ENCODE measurements at regions of chr2 and their contacts with region 1.

Region 1: GRCh38 chr2:174546581-174547506 is 50.8 kb downstream of the WIPF1 start:
- DNase-seq: peak; percentile 52
- CTCF ChIP-seq: peak; percentile 62

Region 2: DNA sequence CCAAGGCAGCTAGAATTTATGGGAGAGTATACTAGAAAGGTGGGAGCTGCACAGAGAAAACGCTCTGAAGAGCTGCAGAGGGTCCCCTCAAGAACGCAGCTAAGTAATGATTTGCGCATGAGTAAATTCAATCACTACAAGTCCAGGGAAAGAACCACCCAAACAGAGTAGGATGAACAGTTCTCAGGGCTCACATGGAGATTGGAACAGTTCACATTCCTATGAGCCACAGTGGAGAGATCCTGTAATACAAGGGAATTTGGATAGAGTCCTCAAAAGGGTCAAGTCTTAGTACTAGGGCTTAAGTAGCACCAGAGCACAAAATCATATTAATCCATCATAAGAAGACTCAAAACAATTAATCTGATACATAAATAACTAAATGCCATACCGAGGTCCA is 311.2 kb before region 1 on chr2:
- CTCF ChIA-PET with region 1: no interaction called
- POLR2A ChIA-PET with region 1: no interaction called
- DNase-seq: no peak
- CTCF ChIP-seq: no peak

Region 3: DNA sequence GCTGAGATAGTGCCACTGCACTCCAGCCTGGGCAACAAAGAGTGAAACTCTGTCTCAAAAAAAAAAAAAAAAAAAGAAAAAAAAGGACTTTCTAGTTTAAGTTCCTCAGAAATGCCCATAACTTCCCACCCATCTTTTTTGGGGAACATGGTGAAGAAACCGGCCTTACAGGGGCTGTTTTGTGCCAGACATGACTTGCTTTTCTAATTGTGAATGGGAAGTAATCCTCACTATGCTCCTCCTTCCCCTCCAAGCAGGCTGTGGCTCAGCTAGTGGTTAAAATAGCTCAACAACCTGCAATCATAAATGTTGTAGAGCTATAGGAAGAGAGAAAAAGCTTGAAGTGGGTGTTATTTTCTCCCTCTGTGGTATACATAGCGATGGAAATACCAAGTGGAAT is 264.4 kb before region 1 on chr2:
- CTCF ChIA-PET with region 1: no interaction called
- POLR2A ChIA-PET with region 1: no interaction called
- DNase-seq: no peak
- CTCF ChIP-seq: no peak

Region 4: DNA sequence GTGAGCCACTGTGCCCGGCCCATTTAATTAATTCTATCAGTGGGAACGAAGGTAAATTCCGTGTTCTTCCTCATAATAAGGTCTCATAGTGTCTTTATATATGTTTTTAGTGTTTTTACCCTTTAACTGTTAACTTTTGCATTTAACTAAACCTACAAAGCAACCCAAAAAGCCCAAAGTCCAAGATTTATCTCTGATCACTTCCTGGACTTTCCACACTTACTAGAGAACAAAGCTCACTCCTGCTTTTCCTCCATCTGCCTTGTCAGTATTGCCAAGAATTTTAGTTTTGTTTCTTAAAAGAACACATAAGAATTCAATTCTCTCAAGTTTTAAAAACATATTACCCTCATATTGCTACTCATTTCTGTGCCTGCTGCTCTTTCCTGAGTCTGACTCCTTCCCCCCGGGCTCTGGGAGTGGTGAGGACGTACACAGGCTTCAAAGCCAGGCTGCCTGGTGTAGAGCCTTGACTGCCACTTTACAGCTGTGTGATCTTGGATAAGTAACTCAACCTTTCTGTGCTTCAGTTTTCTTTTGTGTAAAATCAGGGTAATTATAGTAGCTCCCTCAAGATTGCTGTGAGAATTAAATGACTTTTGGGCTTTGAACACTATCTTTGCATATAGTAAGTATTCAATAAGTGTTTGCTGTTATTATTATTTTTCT is 35.1 kb before region 1 on chr2:
- CTCF ChIA-PET with region 1: interaction called, 11 read pairs
- POLR2A ChIA-PET with region 1: no interaction called
- DNase-seq: no peak
- CTCF ChIP-seq: no peak

Region 5: DNA sequence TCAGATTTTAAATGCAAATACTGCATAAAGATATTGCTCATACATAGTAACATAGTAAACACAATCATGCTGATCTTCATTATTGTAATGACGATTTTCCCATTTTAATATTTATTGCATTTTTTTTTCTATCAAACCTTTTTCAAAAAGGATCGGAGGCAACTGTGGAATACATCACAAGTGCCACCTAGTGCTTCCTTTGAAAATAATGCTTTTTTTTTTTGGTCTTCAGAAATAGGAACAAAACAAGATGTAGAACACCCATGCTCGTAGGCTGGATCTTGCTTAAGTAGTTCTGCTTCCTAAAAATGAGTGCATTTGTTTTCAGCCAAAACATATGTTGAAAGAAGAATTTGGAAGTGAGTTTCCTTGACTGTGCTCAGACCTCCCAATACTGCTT is 24.3 kb before region 1 on chr2:
- CTCF ChIA-PET with region 1: interaction called, 18 read pairs
- POLR2A ChIA-PET with region 1: no interaction called
- DNase-seq: no peak
- CTCF ChIP-seq: no peak

Region 6: DNA sequence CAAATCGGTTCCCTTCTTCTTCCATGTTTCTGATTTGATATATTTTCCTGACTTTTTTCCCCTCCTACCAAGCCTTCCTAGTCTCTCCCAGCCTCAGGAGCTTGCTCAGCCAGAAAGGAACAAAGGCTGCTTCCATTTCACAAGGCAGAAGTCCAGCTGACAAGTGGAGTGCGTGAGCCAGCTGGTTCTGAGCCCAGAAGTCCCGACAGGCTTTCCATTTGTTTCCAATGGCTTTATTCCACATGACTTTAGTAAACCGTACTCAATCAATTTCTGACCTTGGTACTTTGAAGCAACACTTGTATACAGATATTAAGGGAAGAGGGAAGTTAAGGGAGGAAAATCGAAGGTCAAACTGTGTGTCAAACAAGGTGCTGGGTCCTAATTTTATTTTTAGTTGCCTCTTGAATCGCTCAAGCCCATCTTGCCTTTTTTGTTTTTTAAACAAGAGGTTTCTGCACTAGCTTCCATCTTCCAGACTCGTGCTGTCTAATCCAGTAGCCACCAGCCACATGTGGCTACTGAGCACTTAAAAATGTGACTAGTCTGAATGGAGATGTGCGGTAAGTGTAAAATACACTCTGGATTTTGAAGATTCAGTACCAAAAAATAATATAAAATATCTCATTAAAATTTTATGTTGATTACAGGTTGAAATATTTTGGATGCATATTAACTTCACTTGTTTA is 14.6 kb after region 1 on chr2:
- CTCF ChIA-PET with region 1: interaction called, 23 read pairs
- POLR2A ChIA-PET with region 1: no interaction called
- DNase-seq: no peak
- CTCF ChIP-seq: no peak